GM18951 (cell line): ENCODE measurements at regions of chr14 and their contacts with region 1.

Region 1: DNA sequence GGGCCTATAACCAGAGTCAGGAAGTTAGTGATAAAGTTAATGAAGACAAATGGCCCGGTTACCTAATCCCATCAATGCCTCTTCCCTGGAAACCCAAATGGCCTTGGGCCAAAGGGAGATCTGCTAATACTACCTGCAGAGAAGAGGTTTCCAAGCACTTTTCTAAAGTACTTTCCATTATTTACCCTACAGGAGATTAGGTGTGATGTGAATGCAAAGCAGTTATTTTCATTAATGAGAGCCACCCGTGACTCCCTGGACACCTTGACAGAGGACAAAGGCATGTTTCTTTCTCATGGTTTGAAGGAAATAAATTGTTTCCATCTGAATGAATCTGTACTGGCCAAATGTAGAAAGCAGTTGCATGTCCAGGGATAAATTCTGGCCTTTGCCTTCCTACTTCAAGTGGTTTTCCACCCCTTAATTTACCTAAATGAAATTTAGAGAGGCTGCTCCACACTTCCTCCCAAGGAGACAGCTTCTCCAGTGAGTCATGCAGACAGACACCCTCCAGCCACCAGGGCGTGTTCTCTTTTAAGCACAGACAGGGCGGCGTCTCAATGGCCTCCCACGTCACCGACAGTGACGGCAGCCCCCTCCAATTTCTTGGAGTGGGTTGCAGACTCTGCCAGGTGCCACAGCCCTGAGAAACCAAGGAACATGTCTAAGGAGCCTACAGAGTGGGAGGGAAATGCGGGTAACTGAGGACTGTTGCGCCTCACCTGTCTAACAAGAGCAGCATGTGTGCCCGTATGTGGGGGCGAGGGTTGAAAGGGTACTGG is 43.9 kb upstream of the GNPNAT1 start:
- POLR2A ChIP-seq: no peak

Region 2: GRCh38 chr14:53306267-53306721 is 471.0 kb after region 1 on chr14:
- in situ Hi-C with region 1: loop called (anchors 25 kb)
- POLR2A ChIP-seq: no peak

Region 3: DNA sequence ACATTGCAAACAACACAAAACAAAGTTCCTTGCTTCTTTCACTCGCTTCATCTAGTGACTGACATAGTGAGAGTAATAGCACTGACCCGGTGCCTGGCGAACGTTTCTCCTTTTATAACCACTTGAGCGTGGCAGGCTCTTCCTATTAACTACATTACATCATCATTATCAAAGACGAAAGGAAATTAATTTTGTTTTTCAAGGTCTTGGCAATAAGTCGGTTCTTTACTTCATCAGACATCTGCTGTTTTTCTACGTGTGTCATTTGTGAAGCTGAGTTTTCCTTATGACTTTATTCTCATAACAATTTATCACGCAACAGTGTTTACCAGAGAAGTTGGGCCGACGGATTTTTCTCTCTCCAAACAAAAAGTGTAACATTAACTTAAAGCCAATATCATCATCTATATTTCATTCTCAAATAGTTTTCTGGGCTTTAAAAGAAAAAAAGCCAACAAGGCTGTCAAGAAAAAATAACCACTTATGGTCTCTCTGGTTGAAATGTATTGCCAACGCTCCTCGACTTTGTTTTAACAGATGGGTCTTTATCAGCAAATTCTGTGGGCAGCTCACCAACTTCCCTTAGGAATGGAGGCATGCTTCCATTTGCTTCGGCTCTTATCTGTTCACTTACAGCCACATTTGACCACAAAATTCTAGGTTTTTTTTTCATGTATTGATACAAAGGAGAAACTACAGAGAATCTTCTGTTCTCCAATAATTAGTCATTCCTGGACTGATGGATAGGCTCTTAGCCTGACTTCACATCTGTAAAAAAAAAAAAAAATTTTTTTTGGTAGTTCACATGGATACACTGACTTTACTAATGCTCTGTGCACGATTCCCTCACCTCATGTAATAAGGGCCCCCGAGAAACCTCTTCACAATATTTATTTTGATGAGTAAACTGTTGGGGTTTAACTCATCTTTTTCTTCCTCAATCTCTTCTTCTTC is 1464.4 kb after region 1 on chr14:
- in situ Hi-C with region 1: no loop called
- POLR2A ChIP-seq: no peak